Ascending aorta (tissue), 2 donors: ENCODE measurements at regions of chr5 and their contacts with region 1.

Region 1: DNA sequence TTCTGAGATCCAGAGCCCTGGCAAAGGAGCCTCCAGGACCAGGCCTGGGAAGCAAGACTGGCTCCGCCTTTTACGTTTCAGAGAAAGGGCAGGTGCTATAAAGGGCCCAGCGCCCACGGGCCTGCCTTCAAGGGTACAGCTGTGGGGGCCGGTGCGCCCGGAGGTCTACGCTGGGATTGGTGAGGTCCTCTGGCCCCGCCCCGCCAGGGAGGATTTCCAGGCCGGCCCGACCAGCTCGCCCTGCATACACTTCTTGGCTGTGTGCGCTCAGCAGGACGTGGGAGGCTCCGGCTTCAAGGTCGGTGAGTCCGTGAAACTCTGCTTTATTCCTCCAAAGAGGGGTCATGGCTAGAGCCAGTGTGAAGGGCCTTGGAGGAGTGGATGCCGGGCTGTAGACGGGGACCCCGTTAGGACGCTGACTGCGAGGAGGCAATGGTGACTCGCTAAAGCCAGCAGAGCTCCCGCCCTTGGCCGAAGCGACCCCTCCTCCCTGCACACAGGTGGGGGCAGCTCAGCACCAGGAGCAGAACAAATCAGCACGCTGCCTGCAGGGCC is at the start of gene CKMT2:
- DNase-seq: peak; percentile 71 to 90
- H3K4me3 ChIP-seq: peak within 1 kb of the TSS; percentile 55 to 70
- H3K27ac ChIP-seq: peak within 1 kb of the TSS; percentile 93 to 98
- H3K4me1 ChIP-seq: peaks cover 11 to 27% of the 10 kb centered on the region in 2 donors
- H3K27me3 ChIP-seq: no peaks in the 10 kb centered on the region
- CTCF ChIP-seq: no peak
- total RNA-seq, gene CKMT2: 0.43 TPM

Region 2: DNA sequence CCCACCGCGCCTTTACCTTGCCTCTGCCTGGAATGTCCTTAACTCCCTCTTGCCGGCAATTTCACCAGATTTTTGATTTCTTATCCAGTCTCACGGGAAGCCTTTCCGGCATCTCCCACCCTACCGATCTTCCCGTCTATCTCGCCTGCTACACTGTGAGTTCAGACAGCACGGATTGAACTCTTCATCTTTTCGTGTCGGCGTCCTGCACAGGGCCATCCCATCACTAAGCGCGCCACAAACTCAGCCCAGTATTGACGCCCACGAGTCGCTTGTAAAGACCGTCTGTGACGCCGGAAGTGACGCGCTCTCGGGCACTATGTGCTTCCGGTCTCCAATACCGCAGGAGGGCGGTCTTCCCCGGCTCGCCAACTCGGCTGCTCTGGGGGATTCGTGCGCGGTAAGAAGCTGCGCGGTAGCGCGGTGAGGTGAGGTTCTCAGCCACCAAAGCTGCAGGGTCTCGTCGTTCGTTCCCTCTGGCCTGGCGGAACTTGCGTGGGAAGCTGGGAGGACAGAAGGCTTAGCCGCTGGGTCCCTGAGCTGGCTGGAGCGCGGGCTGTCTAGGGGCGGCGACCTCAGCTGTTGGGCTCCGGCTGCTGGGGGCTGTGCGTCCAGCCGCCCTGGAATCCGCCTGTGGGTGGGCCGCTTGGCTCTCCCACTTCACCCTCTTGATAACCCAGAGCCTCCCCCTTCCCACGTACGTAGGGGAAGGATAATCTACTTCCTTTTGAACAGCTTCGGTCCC is 68.3 kb after region 1 on chr5 and contains the start of gene ZCCHC9:
- intact Hi-C with region 1: loop called (anchors 2 kb)
- DNase-seq: peak; percentile 74 to 96
- H3K4me3 ChIP-seq: peak within 1 kb of the TSS; percentile 77 to 96
- H3K27ac ChIP-seq: peak within 1 kb of the TSS; percentile 88 to 93
- H3K4me1 ChIP-seq: peaks cover 5 to 16% of the 10 kb centered on the region in 2 donors
- H3K27me3 ChIP-seq: no peaks in the 10 kb centered on the region
- CTCF ChIP-seq: peak in 2 of 3 experiments; percentile 17 to 19
- total RNA-seq, gene ZCCHC9: 10.5 TPM

Region 3: GRCh38 chr5:81779125-81779915 is 546.2 kb after region 1 on chr5:
- intact Hi-C with region 1: loop called (anchors 10 kb)
- DNase-seq: peak; percentile 28 to 81
- H3K4me3 ChIP-seq: peak overlapping the region; percentile 2 to 28
- H3K27ac ChIP-seq: peak overlapping the region; percentile 86 to 88
- H3K4me1 ChIP-seq: peaks cover 0 to 31% of the 10 kb centered on the region in 2 donors
- H3K27me3 ChIP-seq: no peaks in the 10 kb centered on the region
- CTCF ChIP-seq: no peak